Endothelial cell of umbilical vein (primary cell): ENCODE measurements at regions of chr21 and their contacts with region 1.

Region 1: GRCh38 chr21:44454747-44455523 is at the start of gene LRRC3:
- DNase-seq: peak; percentile 74
- H3K4me3 ChIP-seq: peak within 1 kb of the TSS; percentile 62 to 82 (median 64)
- H3K27ac ChIP-seq: no peak within 1 kb of the TSS
- H3K4me1 ChIP-seq: no peaks in the 10 kb centered on the region
- H3K27me3 ChIP-seq: peaks cover 0 to 3% of the 10 kb centered on the region in 2 experiments
- CTCF ChIP-seq: no peak
- POLR2A ChIP-seq: no peak
- total RNA-seq, gene LRRC3: 4.2 and 4.8 TPM in 2 replicates

Region 2: DNA sequence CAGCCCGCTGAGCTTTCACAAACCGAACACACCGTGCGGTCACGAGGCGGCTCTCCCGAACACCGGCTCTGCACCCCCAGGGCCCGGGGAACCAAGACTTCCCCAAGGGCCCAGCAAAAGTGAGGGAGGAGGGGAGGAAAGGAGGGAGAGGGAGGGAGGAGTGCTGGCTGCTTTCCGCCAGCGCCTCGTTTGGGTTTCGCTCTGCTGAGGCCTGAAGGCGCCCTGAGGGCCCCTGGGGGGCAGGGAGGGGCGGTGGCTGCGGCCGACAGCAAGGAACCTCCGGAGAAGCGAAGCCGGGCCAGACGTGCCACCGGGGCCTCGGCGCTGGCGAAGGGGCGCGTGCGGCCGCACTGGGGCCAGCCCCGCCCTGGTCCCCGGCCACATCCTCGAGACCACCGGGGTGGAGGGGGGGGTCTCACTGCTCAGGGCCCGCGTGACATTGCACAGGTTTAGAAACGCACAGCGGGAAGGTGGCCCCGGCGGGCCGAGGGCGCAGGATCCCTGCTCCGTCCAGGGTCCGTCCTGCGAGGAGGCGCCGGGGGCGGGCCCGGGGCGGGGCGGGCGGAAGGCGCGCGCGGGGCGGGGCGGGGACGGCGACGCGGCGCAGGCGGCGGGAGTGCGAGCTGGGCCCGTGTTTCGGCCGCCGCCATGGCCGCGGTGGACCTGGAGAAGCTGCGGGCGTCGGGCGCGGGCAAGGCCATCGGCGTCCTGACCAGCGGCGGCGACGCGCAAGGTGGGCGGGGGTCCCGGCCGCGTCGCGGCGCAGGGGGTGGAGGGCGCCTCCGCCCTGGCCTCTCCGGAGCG is 155.3 kb before region 1 on chr21 and contains the start of gene PFKL:
- CTCF ChIA-PET with region 1: no interaction called
- POLR2A ChIA-PET with region 1: no interaction called
- dilution Hi-C with region 1: no loop called
- intact Hi-C with region 1: no loop called
- DNase-seq: peak; percentile 38
- H3K4me3 ChIP-seq: peak within 1 kb of the TSS; percentile 57 to 82 (median 65)
- H3K27ac ChIP-seq: peak within 1 kb of the TSS; percentile 68
- H3K4me1 ChIP-seq: peaks cover 12% of the 10 kb centered on the region
- H3K27me3 ChIP-seq: no peaks in the 10 kb centered on the region
- CTCF ChIP-seq: no peak
- POLR2A ChIP-seq: peak; percentile 51
- total RNA-seq, gene PFKL: 154 and 170 TPM in 2 replicates

Region 3: GRCh38 chr21:44347911-44348753 is 106.8 kb before region 1 on chr21:
- CTCF ChIA-PET with region 1: no interaction called
- POLR2A ChIA-PET with region 1: no interaction called
- dilution Hi-C with region 1: no loop called
- intact Hi-C with region 1: loop called (anchors 10 kb)
- DNase-seq: no peak
- H3K4me3 ChIP-seq: no peak overlapping the region
- H3K27ac ChIP-seq: no peak overlapping the region
- H3K4me1 ChIP-seq: no peaks in the 10 kb centered on the region
- H3K27me3 ChIP-seq: peaks cover 7 to 18% of the 10 kb centered on the region in 2 experiments
- CTCF ChIP-seq: no peak
- POLR2A ChIP-seq: no peak

Region 4: GRCh38 chr21:44618504-44618903 is 163.6 kb after region 1 on chr21:
- CTCF ChIA-PET with region 1: no interaction called
- POLR2A ChIA-PET with region 1: no interaction called
- dilution Hi-C with region 1: no loop called
- intact Hi-C with region 1: no loop called
- DNase-seq: peak; percentile 7
- H3K4me3 ChIP-seq: no peak overlapping the region
- H3K27ac ChIP-seq: no peak overlapping the region
- H3K4me1 ChIP-seq: no peaks in the 10 kb centered on the region
- H3K27me3 ChIP-seq: no peaks in the 10 kb centered on the region
- CTCF ChIP-seq: peak in 1 of 2 donors; percentile 27
- POLR2A ChIP-seq: no peak